ENCODE measurements at regions of chr2 and their contacts with region 1.

Region 1: GRCh38 chr2:162174746-162175145 is 22.7 kb upstream of the GCG start:
- DNase-seq: no peak
- CTCF ChIP-seq: no peak

Region 2: GRCh38 chr2:161825429-161825828 is 349.3 kb before region 1 on chr2:
- CTCF ChIA-PET with region 1: no interaction called
- POLR2A ChIA-PET with region 1: no interaction called
- DNase-seq: no peak
- CTCF ChIP-seq: no peak

Region 3: GRCh38 chr2:162184821-162185446 is 10.2 kb after region 1 on chr2:
- CTCF ChIA-PET with region 1: interaction called, 13 read pairs
- POLR2A ChIA-PET with region 1: no interaction called
- DNase-seq: no peak
- CTCF ChIP-seq: no peak

Region 4: DNA sequence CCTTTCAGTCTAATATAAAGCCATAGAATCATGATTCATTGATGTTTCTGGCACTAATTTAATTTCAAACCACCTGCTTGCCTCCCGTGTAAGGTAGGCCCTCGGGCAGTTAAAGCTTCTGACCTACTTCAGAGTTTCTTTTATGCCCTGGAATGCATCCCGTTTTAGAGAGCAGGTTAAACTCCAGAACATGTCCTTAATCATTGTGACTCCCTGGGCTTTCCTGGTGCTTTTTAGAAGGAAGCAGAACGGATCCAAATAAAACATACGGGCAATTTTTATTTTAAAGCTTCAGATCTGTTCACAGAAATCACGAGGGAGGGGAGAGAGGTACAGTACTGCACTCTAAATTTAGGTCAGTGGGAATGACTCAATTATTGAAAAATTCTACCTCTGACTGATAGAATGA is 304.0 kb after region 1 on chr2:
- CTCF ChIA-PET with region 1: no interaction called
- POLR2A ChIA-PET with region 1: no interaction called
- DNase-seq: no peak
- CTCF ChIP-seq: no peak